Psoas muscle (tissue), 8 donors: ENCODE measurements at regions of chr20 and their contacts with region 1.

Region 1: DNA sequence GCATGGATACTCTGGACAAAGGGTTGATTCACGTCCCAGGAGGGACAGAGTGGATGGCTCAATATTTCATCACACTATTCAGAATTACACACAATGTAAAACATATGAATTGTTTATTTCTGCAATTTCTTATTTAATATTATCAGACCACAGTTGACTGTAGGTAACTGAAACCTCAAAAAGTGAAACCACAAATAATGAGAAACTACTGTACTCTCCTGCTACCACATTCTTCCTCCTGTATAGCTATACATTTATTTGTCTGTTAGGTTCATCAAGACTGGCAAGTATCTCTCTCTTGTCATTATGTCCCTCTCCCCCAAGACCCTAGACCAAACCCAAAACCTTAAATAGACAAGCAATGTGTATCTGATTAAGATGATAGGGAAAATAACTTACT is 60.0 kb downstream of the SYCP2 start:
- DNase-seq: no peak
- ATAC-seq: no peak
- H3K4me3 ChIP-seq: no peak overlapping the region
- H3K27ac ChIP-seq: no peak overlapping the region
- H3K4me1 ChIP-seq: no peaks in the 10 kb centered on the region
- H3K27me3 ChIP-seq: no peaks in the 10 kb centered on the region
- CTCF ChIP-seq: no peak

Region 2: GRCh38 chr20:59810449-59811187 is 62.8 kb before region 1 on chr20:
- intact Hi-C with region 1: no loop called
- DNase-seq: no peak
- ATAC-seq: no peak
- H3K4me3 ChIP-seq: no peak overlapping the region
- H3K27ac ChIP-seq: no peak overlapping the region
- H3K4me1 ChIP-seq: no peaks in the 10 kb centered on the region
- H3K27me3 ChIP-seq: no peaks in the 10 kb centered on the region
- CTCF ChIP-seq: no peak

Region 3: GRCh38 chr20:59903621-59904020 is 30.2 kb after region 1 on chr20:
- intact Hi-C with region 1: loop called in 1 of 2 experiments (anchors 1 kb)
- DNase-seq: no peak
- ATAC-seq: no peak
- H3K4me3 ChIP-seq: no peak overlapping the region
- H3K27ac ChIP-seq: no peak overlapping the region
- H3K4me1 ChIP-seq: no peaks in the 10 kb centered on the region
- H3K27me3 ChIP-seq: no peaks in the 10 kb centered on the region
- CTCF ChIP-seq: no peak